ENCODE measurements at regions of chr15 and their contacts with region 1.

Region 1: GRCh38 chr15:42920519-42921227 is at the start of gene TTBK2:
- DNase-seq: peak; percentile 97 to 99 (median 98)
- ATAC-seq: peak; percentile 97 to 99 (median 98)
- H3K4me3 ChIP-seq: peak within 1 kb of the TSS; percentile 65 to 97 (median 96)
- H3K27ac ChIP-seq: peak within 1 kb of the TSS; percentile 73 to 87 (median 77)
- H3K4me1 ChIP-seq: peaks cover 0 to 6% (median 3%) of the 10 kb centered on the region in 3 donors
- H3K27me3 ChIP-seq: no peaks in the 10 kb centered on the region
- CTCF ChIP-seq: peak in 2 of 4 donors; percentile 11 to 13
- total RNA-seq, gene TTBK2: 3.4 to 8.5 (median 5.1) TPM

Region 2: DNA sequence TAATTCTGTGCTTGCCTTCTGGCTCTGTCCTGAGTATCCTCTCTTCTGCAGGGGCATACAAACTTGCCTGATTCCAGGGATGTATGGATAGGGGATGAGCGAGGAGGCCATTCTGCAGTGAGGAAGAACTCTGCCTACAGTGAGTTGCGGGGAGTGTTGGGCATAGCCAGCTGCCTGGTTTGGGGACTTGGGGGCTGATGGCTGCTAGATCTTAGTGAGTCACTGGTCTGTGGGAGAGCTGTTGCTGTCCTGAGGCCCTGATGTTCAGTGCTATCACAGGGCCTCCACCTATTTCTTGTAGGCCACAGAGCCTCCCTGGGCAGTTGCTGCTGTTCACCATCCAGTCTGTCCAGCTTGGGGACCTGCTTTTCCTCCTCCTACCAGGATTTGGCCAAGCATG is 204.0 kb before region 1 on chr15:
- intact Hi-C with region 1: loop called in 1 of 3 experiments (anchors 10 kb)
- DNase-seq: peak in 1 of 6 donors; percentile 24
- ATAC-seq: no peak
- H3K4me3 ChIP-seq: no peak overlapping the region
- H3K27ac ChIP-seq: no peak overlapping the region
- H3K4me1 ChIP-seq: no peaks in the 10 kb centered on the region
- H3K27me3 ChIP-seq: no peaks in the 10 kb centered on the region
- CTCF ChIP-seq: no peak